Caco-2 (cell line): ENCODE measurements at regions of chr1 and their contacts with region 1.

Region 1: DNA sequence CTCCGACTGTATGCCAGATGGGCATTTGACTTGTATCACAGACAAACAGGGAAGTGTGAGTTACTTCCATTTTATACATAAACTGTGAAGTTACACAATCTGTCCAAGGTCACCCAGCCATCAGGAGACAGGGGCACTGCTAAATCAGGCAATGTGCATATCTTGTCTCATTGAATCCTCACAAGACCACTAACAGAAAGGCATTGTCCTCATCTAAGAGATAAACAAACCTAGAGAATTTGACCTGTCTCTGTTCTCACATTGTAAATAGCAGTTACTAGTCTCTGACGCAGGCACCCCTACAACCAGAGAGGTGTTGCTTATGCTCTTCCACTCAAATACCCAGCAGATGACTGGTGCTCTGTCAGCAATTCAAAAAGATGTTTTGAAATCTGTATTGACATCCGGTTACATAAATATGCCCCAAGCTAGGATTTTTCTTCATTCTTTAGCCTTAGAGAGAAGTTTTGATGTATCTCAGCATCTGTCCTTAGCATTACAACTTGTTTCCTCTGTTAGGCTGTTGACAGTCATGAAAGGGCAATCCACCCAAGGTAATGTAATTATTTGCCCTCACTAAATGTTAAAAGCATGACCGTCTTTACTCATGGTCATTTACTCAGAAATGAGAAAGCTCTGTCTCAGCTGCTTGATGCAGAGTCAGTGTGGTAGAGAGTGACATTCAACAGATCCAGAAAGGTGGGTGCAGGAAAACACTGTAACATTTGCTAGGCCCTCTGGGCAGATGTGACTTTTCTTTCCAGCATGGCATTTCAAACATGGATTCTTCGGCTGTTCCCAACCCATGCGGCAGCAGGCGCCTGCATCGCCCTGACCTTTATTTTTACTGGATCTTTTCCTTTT is 51.9 kb upstream of the ZNF326 start:
- DNase-seq: no peak
- H3K4me3 ChIP-seq: no peak overlapping the region
- H3K4me3 Mint-ChIP-seq: no peak overlapping the region
- H3K27ac Mint-ChIP-seq: no peak overlapping the region
- H3K4me1 ChIP-seq: peaks cover 4% of the 10 kb centered on the region
- H3K4me1 Mint-ChIP-seq: peaks cover 8% of the 10 kb centered on the region
- H3K27me3 ChIP-seq: no peaks in the 10 kb centered on the region
- H3K27me3 Mint-ChIP-seq: no peaks in the 10 kb centered on the region
- CTCF ChIP-seq: no peak

Region 2: GRCh38 chr1:89850844-89851415 is 92.1 kb before region 1 on chr1:
- CTCF ChIA-PET with region 1: no interaction called
- POLR2A ChIA-PET with region 1: no interaction called
- intact Hi-C with region 1: loop called (anchors 5 kb)
- DNase-seq: no peak
- H3K4me3 ChIP-seq: no peak overlapping the region
- H3K4me3 Mint-ChIP-seq: no peak overlapping the region
- H3K27ac Mint-ChIP-seq: no peak overlapping the region
- H3K4me1 ChIP-seq: no peaks in the 10 kb centered on the region
- H3K4me1 Mint-ChIP-seq: no peaks in the 10 kb centered on the region
- H3K27me3 ChIP-seq: no peaks in the 10 kb centered on the region
- H3K27me3 Mint-ChIP-seq: no peaks in the 10 kb centered on the region
- CTCF ChIP-seq: no peak

Region 3: GRCh38 chr1:90100566-90100965 is 157.5 kb after region 1 on chr1:
- CTCF ChIA-PET with region 1: no interaction called
- POLR2A ChIA-PET with region 1: no interaction called
- intact Hi-C with region 1: no loop called
- DNase-seq: no peak
- H3K4me3 ChIP-seq: no peak overlapping the region
- H3K4me3 Mint-ChIP-seq: no peak overlapping the region
- H3K27ac Mint-ChIP-seq: no peak overlapping the region
- H3K4me1 ChIP-seq: no peaks in the 10 kb centered on the region
- H3K4me1 Mint-ChIP-seq: no peaks in the 10 kb centered on the region
- H3K27me3 ChIP-seq: no peaks in the 10 kb centered on the region
- H3K27me3 Mint-ChIP-seq: peaks cover 3% of the 10 kb centered on the region
- CTCF ChIP-seq: no peak